Endothelial cell of umbilical vein (primary cell): ENCODE measurements at regions of chr12 and their contacts with region 1.

Region 1: GRCh38 chr12:32106517-32107358 is at the start of gene BICD1:
- DNase-seq: peak; percentile 92
- H3K4me3 ChIP-seq: peak within 1 kb of the TSS; percentile 58 to 84 (median 67)
- H3K27ac ChIP-seq: peak within 1 kb of the TSS; percentile 69
- H3K4me1 ChIP-seq: peaks cover 14% of the 10 kb centered on the region
- H3K27me3 ChIP-seq: no peaks in the 10 kb centered on the region
- CTCF ChIP-seq: peak; percentile 20 to 40
- POLR2A ChIP-seq: peak; percentile 76
- total RNA-seq, gene BICD1: 45.8 and 51.0 TPM in 2 replicates

Region 2: GRCh38 chr12:31659087-31659933 is 447.4 kb before region 1 on chr12 and contains the start of gene ETFBKMT:
- CTCF ChIA-PET with region 1: no interaction called
- POLR2A ChIA-PET with region 1: no interaction called
- dilution Hi-C with region 1: no loop called
- intact Hi-C with region 1: loop called (anchors 2 kb)
- DNase-seq: peak; percentile 89
- H3K4me3 ChIP-seq: peak within 1 kb of the TSS; percentile 75 to 87 (median 81)
- H3K27ac ChIP-seq: peak within 1 kb of the TSS; percentile 87
- H3K4me1 ChIP-seq: peaks cover 4% of the 10 kb centered on the region
- H3K27me3 ChIP-seq: no peaks in the 10 kb centered on the region
- CTCF ChIP-seq: peak; percentile 30 to 38
- POLR2A ChIP-seq: peak; percentile 86
- total RNA-seq, gene ETFBKMT: 2.4 and 3.1 TPM in 2 replicates

Region 3: DNA sequence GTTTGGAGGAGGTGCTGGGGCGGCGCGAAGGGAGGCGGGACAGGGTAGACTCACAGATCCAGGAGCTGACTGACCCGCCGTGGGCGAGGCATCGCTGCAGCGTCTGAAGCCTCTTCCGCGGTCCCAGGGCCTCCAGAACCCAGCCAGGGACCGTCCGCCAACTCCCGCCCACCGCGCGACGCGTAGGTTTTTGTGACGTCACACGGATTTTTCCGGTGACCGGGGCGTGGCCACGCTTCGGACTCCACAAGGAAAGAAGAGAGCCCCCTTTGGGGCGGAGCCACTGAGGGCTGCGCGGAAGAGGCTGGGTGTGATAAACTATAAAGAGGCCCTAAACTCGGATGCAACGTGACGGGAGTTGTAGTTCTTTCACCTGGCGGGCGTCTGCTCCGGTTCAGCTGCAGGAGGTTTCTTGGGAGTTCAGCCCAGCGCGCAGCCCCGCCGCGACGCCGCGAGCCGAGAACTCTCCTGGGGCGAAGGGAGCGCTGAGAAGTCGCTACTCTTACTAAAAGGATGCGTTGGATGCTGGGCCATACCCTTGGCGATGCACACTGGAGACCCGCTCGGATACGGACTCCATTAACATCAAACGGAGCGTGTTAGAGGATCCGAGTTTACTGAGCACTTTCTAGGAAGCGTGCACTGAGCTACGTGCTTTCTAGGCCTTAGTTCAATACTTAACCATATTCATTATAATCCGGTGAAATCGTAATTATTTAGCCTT is 377.7 kb before region 1 on chr12 and contains the start of gene AMN1:
- CTCF ChIA-PET with region 1: interaction called, 3 read pairs
- POLR2A ChIA-PET with region 1: no interaction called
- dilution Hi-C with region 1: no loop called
- intact Hi-C with region 1: loop called (anchors 5 kb)
- DNase-seq: peak; percentile 100
- H3K4me3 ChIP-seq: peak within 1 kb of the TSS; percentile 24 to 75 (median 55)
- H3K27ac ChIP-seq: peak within 1 kb of the TSS; percentile 90
- H3K4me1 ChIP-seq: peaks cover 37% of the 10 kb centered on the region
- H3K27me3 ChIP-seq: no peaks in the 10 kb centered on the region
- CTCF ChIP-seq: no peak
- POLR2A ChIP-seq: peak; percentile 7
- total RNA-seq, gene AMN1: 8.5 and 11.8 TPM in 2 replicates

Region 4: GRCh38 chr12:32062881-32063280 is 43.9 kb before region 1 on chr12:
- CTCF ChIA-PET with region 1: interaction called, 21 read pairs
- POLR2A ChIA-PET with region 1: no interaction called
- dilution Hi-C with region 1: no loop called
- intact Hi-C with region 1: loop called (anchors 2 kb)
- DNase-seq: no peak
- H3K4me3 ChIP-seq: no peak overlapping the region
- H3K27ac ChIP-seq: no peak overlapping the region
- H3K4me1 ChIP-seq: no peaks in the 10 kb centered on the region
- H3K27me3 ChIP-seq: peaks cover 0 to 2% of the 10 kb centered on the region in 2 experiments
- CTCF ChIP-seq: no peak
- POLR2A ChIP-seq: no peak

Region 5: GRCh38 chr12:32159925-32160324 is 53.2 kb after region 1 on chr12:
- CTCF ChIA-PET with region 1: no interaction called
- POLR2A ChIA-PET with region 1: no interaction called
- dilution Hi-C with region 1: no loop called
- intact Hi-C with region 1: loop called (anchors 10 kb)
- DNase-seq: no peak
- H3K4me3 ChIP-seq: no peak overlapping the region
- H3K27ac ChIP-seq: no peak overlapping the region
- H3K4me1 ChIP-seq: peaks cover 7% of the 10 kb centered on the region
- H3K27me3 ChIP-seq: no peaks in the 10 kb centered on the region
- CTCF ChIP-seq: no peak
- POLR2A ChIP-seq: no peak